ENCODE measurements at regions of chr12 and their contacts with region 1.

Region 1: GRCh38 chr12:113462117-113462774 is 9.4 kb downstream of the LHX5 start:
- DNase-seq: peak; percentile 44
- ATAC-seq: peak; percentile 81
- H3K4me3 ChIP-seq: peak overlapping the region in 1 of 3 experiments; percentile 7; a peak in 1 of 6 replicates
- H3K27ac ChIP-seq: no peak overlapping the region
- H3K4me1 ChIP-seq: no peaks in the 10 kb centered on the region
- H3K27me3 ChIP-seq: peaks cover 11 to 45% of the 10 kb centered on the region in 2 experiments
- CTCF ChIP-seq: peak; percentile 88
- EP300 ChIP-seq: no peak
- POLR2A ChIP-seq: no peak
- RAD21 ChIP-seq: peak; percentile 58

Region 2: DNA sequence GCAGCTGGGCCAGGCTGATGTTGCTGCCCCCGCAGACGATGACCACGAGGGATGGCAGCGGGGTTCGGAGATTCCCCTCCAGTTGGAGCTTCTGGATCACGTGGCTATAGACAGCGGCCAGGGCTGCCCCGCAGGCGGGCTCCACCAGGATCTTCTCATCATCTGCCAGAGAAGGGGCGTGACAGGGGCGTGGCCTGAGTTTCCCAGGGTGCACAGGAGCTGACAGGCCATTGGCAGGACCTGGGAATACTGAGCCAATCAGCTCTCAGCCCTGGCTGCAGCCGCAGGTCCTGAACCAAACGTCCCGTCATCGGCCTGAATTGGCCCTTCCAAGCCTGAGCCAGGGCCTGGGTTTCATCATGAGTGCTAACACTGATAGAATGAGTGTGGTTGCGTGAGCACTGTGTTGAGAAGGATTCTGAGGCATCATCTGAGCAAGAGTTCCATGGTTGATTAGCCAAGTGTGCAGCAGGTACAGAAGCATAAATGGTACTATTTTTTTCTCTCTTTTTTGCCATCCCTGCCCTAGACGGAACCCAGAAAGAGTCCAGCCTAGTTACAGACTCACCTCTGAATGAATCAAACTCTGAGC is 69.2 kb before region 1 on chr12:
- CTCF ChIA-PET with region 1: no interaction called
- POLR2A ChIA-PET with region 1: no interaction called
- in situ Hi-C with region 1: no loop called
- intact Hi-C with region 1: no loop called
- DNase-seq: peak; percentile 48
- ATAC-seq: peak; percentile 83
- H3K4me3 ChIP-seq: no peak overlapping the region
- H3K27ac ChIP-seq: no peak overlapping the region
- H3K4me1 ChIP-seq: 0 out of 2 replicates have a peak, but pooled peaks cover 9% of the 10 kb centered on the region
- H3K27me3 ChIP-seq: peaks cover 3% of the 10 kb centered on the region in 2 experiments; a peak in 1 of 5 replicates
- CTCF ChIP-seq: no peak
- EP300 ChIP-seq: no peak
- POLR2A ChIP-seq: no peak
- RAD21 ChIP-seq: no peak

Region 3: DNA sequence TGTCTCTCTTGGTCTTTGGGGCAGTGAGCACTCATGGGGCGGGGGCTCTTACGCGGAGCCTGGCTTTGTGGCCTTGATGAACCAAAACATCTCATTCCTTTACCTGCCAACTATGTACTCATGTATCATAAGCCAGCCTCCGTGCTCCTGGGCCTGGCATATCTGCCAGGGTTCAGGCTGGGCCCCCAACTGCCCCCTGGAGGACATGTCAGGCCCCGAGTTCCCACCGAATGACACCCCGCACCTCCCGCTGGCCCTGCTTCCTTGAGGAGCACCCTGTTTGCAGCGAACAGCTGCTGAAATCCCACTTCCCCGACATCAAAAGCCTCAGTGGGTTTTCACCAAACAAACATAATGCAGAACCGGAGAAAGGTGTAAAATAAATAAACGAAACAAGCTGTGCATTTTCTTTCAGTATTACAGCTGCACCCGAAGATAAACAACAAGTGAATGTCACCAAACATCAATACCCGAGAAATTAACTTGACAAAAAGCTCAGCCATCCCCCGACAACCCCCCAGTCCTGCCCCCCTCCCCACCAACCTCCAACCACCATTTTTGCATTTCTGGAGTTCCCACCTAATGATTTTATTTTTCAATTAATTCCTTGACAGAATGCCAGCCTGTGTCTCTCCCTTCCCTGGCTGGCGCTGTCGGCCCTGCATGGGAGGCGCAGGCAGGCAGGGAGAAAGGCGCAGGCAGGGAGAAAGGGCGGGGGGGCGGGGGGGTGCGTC is 364.7 kb after region 1 on chr12:
- CTCF ChIA-PET with region 1: no interaction called
- POLR2A ChIA-PET with region 1: no interaction called
- in situ Hi-C with region 1: loop called (anchors 10 kb)
- intact Hi-C with region 1: no loop called
- DNase-seq: no peak
- ATAC-seq: no peak
- H3K4me3 ChIP-seq: no peak overlapping the region
- H3K27ac ChIP-seq: no peak overlapping the region
- H3K4me1 ChIP-seq: no peaks in the 10 kb centered on the region
- H3K27me3 ChIP-seq: no peaks in the 10 kb centered on the region
- CTCF ChIP-seq: peak; percentile 45
- EP300 ChIP-seq: no peak
- POLR2A ChIP-seq: no peak
- RAD21 ChIP-seq: no peak